Left ventricle myocardium superior (tissue), 1 donor: ENCODE measurements at regions of chr5 and their contacts with region 1.

Region 1: DNA sequence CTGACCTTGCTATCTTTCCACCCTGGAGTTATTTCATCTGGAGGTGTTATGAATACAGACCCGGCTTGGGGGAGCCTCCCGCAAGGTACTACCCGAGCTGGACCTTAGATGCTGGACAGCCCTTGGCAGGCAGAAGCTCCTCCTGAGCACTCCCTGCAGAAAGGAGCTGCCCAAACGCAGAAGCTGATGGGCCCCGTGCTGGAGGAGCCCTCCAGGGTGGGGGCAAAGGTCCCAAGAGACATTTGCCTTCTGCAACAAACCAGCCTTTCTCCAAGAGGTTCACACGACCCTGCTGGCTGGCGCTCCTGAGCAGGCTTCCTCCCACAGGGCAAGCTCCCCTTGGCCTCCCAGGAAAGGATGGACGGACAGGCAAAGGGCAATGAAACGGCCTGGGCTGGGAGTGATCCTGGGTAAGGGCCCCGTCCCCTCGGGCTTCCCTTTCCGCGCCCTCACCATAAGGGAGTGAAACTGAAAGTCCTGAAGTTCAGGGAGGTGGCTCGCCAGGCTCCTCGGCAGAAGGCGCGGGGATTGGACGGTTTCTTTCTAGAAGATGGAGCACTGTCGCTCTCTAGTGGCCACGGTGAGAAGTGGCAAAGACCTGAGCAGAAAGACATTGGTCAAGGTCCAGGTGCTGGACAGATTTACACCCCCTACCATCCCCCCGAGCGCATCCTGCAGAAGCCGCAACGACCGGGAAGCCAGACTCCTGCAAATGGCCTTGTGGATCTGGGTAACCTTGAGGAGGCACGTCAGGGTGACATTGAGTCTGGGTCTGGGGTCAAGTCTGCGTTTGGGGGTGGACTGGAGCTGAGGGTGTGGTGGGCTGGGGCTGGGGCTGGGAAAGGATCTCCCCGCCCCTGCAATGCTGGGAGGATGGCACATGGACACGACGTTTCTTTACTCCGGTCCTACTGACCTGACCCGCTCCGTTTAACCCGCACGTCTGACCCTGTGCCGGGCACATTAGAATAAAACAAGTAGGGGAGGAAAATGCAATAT is 56.4 kb downstream of the NEURL1B start:
- DNase-seq: peak; percentile 89
- ATAC-seq: peak; percentile 62

Region 2: GRCh38 chr5:172479044-172479783 is 218.2 kb before region 1 on chr5:
- intact Hi-C with region 1: loop called (anchors 5 kb)
- DNase-seq: peak; percentile 88
- ATAC-seq: peak; percentile 97

Region 3: DNA sequence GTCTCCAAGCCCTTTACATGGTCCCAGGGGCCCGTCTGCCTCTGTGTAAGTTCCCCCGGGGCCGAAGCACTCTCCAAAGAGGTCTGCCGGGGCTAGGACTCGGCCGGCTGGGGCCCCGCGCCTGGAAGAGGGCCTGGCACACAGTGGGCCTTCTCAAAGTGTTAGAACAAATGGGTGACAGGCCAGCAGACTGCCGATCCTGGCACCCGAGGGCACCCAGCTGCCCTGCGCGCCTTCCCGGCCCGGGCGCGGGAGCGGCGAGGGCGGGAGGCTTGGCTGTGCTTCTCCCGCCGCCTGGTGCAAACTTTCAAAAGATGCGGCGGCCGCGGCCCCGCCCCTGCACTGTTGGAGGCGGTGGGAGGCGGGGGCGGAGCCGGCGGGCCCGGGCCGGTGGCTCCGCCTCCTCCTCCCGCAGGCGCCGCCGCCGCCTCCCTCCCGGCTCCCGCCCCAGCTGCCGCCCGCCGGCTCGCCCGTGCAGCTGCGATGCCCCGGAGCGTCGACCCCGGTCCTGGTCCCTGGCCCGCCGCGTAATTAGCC is 56.5 kb before region 1 on chr5 and contains the start of gene NEURL1B:
- intact Hi-C with region 1: loop called (anchors 10 kb)
- DNase-seq: peak; percentile 93
- ATAC-seq: peak; percentile 88
- total RNA-seq, gene NEURL1B: 32.0 TPM